Dendritic cell treated with granulocyte-macrophage colony-stimulating factor and Interleukin-4, amounts not matched to agents 40 ng/mL and 50 ng/mL, for 4 days (primary cell): ENCODE measurements at regions of chr1 and their contacts with region 1.

Region 1: DNA sequence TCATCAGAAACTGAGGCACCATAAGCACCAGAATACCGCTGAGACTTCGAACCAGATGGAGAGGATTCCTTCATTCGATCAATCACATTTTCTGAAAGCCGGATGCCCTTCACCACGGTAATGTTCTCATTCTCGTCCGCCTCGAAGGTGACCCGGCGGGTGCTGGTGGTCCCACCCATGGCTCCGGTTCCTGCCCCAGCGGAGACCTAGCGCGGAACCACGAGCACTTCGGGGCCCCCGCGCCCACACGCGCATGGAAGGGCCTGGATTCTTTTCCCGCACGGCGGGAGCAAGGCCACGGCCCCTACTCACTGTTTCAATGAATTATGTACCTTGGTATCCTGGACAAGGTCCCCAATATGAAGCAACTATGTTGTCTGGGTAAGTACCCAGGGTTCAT is 33.1 kb upstream of the WDTC1 start:
- H3K4me3 Mint-ChIP-seq: no peak overlapping the region
- H3K27ac Mint-ChIP-seq: no peak overlapping the region
- H3K4me1 Mint-ChIP-seq: peaks cover 19% of the 10 kb centered on the region
- H3K27me3 Mint-ChIP-seq: peaks cover 14% of the 10 kb centered on the region

Region 2: DNA sequence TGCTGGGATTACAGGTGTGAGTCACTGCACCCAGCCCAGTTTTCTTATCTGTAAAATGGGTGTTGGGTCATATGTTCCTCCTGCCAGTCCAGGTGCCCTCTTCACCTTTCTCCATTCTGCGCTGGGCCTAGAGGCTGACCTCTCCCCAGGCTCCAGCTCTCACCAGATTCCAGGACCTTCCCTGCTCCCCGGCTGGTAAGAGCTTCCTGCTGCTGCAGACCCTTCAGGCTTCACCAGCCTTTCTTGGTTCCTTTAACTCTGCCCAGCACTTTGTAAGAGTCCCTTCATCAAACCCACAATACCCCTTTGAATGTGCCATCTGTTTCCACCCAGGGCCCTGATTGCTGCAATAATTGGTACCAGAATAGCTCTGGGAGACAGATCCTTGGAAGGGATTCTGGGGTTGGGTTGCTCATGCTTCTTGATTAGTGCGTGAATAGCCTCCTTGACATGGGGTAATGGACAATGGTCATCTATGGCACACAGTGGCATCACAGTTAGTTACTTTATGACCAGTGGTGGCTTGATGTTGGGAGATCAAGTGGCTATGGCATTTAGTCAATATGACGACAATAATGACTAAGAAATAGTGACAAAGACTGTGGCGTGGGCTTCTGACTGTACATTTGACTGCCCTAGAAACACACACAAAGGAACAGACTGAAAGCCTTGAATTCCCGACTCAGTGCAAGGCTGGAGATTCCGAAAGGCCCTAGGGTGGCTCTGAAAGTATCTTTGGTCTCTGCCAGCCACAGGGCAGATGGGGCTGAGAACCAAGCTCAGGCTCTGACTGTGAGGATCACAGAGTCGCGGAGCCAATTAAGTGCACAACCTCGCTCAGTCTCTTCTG is 113.7 kb before region 1 on chr1:
- intact Hi-C with region 1: no loop called
- H3K4me3 Mint-ChIP-seq: no peak overlapping the region
- H3K27ac Mint-ChIP-seq: no peak overlapping the region
- H3K4me1 Mint-ChIP-seq: peaks cover 5% of the 10 kb centered on the region
- H3K27me3 Mint-ChIP-seq: peaks cover 22% of the 10 kb centered on the region

Region 3: DNA sequence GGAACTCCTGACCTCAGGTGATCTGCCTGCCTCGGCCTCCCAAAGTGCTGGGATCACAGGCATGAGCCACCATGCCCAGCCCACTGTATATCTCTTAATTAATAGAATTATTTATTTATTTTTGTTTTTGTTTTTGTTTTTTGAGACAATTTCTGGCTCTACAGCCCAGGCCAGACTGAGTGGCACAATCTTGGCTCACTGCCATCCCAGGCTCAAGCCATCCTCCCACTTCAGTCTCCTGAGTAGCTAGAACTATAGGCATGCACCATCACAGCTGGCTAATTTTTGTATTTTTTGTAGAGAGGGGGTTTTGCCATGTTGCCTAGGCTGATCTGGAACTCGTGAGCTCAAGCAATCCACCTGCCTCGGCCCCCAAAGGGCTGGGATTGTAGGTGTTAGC is 17.4 kb after region 1 on chr1:
- intact Hi-C with region 1: no loop called
- H3K4me3 Mint-ChIP-seq: no peak overlapping the region
- H3K27ac Mint-ChIP-seq: no peak overlapping the region
- H3K4me1 Mint-ChIP-seq: no peaks in the 10 kb centered on the region
- H3K27me3 Mint-ChIP-seq: peaks cover 3% of the 10 kb centered on the region

Region 4: GRCh38 chr1:27235827-27236226 is 34.5 kb after region 1 on chr1:
- intact Hi-C with region 1: loop called (anchors 1 kb)
- H3K4me3 Mint-ChIP-seq: peak overlapping the region; percentile 88
- H3K27ac Mint-ChIP-seq: peak overlapping the region; percentile 84
- H3K4me1 Mint-ChIP-seq: peaks cover 39% of the 10 kb centered on the region
- H3K27me3 Mint-ChIP-seq: no peaks in the 10 kb centered on the region

Region 5: GRCh38 chr1:27290581-27290980 is 89.3 kb after region 1 on chr1:
- intact Hi-C with region 1: no loop called
- H3K4me3 Mint-ChIP-seq: no peak overlapping the region
- H3K27ac Mint-ChIP-seq: no peak overlapping the region
- H3K4me1 Mint-ChIP-seq: no peaks in the 10 kb centered on the region
- H3K27me3 Mint-ChIP-seq: no peaks in the 10 kb centered on the region